Activated CD4-positive, alpha-beta memory T cell treated with anti-CD3 and anti-CD28 coated beads, Interleukin-2, amount 10 ng/mL, durations not matched to agents 7 days and 5 days (primary cell): ENCODE measurements at regions of chr7 and their contacts with region 1.

Region 1: GRCh38 chr7:105387621-105388372 is 924 bp downstream of the SRPK2 start:
- DNase-seq: peak; percentile 60
- H3K4me3 Mint-ChIP-seq: peak overlapping the region; percentile 78
- H3K27ac Mint-ChIP-seq: no peak overlapping the region
- H3K4me1 Mint-ChIP-seq: peaks cover 18% of the 10 kb centered on the region
- H3K27me3 Mint-ChIP-seq: no peaks in the 10 kb centered on the region

Region 2: GRCh38 chr7:105024743-105025142 is 363.1 kb before region 1 on chr7:
- CTCF ChIA-PET with region 1: no interaction called
- POLR2A ChIA-PET with region 1: no interaction called
- DNase-seq: no peak
- H3K4me3 Mint-ChIP-seq: no peak overlapping the region
- H3K27ac Mint-ChIP-seq: no peak overlapping the region
- H3K4me1 Mint-ChIP-seq: peaks cover 78% of the 10 kb centered on the region
- H3K27me3 Mint-ChIP-seq: no peaks in the 10 kb centered on the region

Region 3: GRCh38 chr7:105173586-105173985 is 214.2 kb before region 1 on chr7:
- CTCF ChIA-PET with region 1: no interaction called
- POLR2A ChIA-PET with region 1: no interaction called
- DNase-seq: no peak
- H3K4me3 Mint-ChIP-seq: no peak overlapping the region
- H3K27ac Mint-ChIP-seq: no peak overlapping the region
- H3K4me1 Mint-ChIP-seq: peaks cover 2% of the 10 kb centered on the region
- H3K27me3 Mint-ChIP-seq: no peaks in the 10 kb centered on the region

Region 4: DNA sequence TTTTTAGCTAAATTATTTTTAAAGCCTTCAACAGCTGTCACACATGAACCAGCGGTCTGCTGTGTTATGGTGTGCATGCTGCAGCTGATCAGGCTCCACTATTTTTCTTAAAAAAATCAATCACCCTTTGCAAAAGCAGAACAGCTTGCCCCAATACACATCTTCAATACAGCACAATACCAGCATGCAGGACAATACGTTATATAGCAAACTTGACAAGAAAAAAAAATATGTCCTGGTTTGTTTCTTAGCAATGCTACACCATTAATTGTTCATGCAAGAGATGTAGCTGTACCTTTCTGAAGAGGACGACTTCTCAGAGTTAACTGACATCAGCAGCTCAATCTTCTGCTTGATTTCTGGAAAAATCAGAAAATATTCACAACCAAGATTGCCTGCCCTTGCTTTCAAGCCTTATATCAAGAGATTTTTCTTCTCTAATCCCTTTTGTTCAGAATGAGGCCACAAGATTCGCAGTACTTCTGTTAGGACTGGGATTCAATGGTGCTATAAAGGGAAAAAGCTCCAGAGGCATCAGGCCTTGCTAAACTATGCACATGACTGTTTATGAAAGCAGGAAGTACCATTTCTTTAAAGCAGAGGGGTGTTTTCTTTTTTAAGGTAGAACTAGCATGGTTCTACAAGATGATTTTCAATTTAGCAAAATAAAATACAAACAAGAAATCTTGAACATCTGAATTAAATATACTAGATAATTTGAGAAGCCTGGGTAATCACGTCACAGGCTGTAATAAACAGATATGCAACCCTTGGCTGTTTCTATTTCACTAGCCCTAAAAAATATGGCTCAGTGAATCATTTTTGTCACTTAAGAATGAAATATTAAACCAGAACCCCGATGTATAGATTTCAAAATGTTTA is 119.0 kb before region 1 on chr7:
- CTCF ChIA-PET with region 1: no interaction called
- POLR2A ChIA-PET with region 1: interaction called, 10 read pairs
- DNase-seq: no peak
- H3K4me3 Mint-ChIP-seq: peak overlapping the region; percentile 53
- H3K27ac Mint-ChIP-seq: peak overlapping the region; percentile 62
- H3K4me1 Mint-ChIP-seq: peaks cover 29% of the 10 kb centered on the region
- H3K27me3 Mint-ChIP-seq: no peaks in the 10 kb centered on the region

Region 5: GRCh38 chr7:105346593-105347322 is 41.0 kb before region 1 on chr7:
- CTCF ChIA-PET with region 1: interaction called, 19 read pairs
- POLR2A ChIA-PET with region 1: interaction called, 38 read pairs
- DNase-seq: peak; percentile 49
- H3K4me3 Mint-ChIP-seq: peak overlapping the region; percentile 19
- H3K27ac Mint-ChIP-seq: peak overlapping the region; percentile 73
- H3K4me1 Mint-ChIP-seq: peaks cover 56% of the 10 kb centered on the region
- H3K27me3 Mint-ChIP-seq: no peaks in the 10 kb centered on the region

Region 6: DNA sequence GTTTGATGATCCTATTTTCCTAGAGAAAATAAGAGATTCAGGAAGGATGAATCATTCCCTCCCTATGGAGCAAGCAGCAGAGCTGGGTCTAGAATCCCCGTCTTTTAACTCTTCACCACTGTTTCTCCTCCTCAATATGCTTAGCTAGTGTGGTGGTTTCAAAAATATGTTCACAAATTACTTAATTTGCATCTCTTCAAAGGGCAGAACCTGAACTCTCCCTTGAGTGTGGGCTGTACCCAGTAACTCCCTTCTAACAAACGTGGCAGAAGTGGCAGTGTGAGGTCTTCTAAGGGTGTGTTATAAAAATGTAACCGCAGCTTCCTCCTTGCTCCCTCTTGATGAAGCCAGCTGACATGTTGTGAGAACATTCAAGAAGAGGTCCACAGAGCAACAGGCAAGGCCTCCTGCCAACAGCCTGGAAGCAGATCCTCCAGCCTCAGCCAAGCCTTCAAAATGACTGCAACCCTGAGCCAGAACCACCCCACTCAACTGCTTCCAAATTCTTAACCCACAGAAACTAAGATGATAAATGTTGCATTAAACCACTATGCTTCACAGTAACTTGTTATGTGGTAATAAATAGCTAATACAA is 35.7 kb before region 1 on chr7:
- CTCF ChIA-PET with region 1: interaction called, 19 read pairs
- POLR2A ChIA-PET with region 1: interaction called, 38 read pairs
- DNase-seq: peak; percentile 69
- H3K4me3 Mint-ChIP-seq: peak overlapping the region; percentile 46
- H3K27ac Mint-ChIP-seq: peak overlapping the region; percentile 97
- H3K4me1 Mint-ChIP-seq: peaks cover 54% of the 10 kb centered on the region
- H3K27me3 Mint-ChIP-seq: no peaks in the 10 kb centered on the region

Region 7: DNA sequence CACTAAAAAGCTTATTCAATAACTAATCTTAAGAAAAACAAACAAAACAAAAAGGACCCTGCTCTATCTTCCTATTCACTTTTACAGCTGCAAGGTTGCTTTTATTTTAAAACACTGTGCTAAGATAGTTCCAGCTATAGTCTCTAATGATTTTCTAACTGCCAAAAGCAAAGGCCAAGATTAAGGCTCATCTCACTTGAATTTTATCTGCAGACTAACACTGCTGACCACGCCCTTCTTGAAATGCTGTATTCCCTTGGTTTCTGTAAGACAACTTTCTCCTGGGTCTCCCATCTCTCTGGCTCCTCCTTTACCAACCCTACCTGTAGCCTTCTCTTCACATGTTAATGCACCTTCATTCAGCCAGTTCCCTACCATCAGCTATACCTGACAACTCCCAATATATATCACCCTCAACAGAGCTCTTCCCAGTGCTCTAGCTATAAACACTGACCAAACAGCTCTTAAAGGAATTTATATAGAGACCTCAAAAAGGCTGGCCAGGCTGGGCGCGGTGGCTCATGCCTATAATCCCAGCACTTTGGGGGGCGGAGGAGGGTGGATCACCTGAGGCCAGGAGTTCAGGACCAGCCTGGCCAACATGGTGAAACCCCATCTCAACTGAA is 10.8 kb before region 1 on chr7:
- CTCF ChIA-PET with region 1: interaction called, 3 read pairs
- POLR2A ChIA-PET with region 1: interaction called, 15 read pairs
- DNase-seq: no peak
- H3K4me3 Mint-ChIP-seq: no peak overlapping the region
- H3K27ac Mint-ChIP-seq: no peak overlapping the region
- H3K4me1 Mint-ChIP-seq: peaks cover 7% of the 10 kb centered on the region
- H3K27me3 Mint-ChIP-seq: no peaks in the 10 kb centered on the region

Region 8: GRCh38 chr7:105531792-105532671 is 144.2 kb after region 1 on chr7 and contains the start of gene RINT1:
- CTCF ChIA-PET with region 1: interaction called, 3 read pairs
- POLR2A ChIA-PET with region 1: interaction called, 12 read pairs
- DNase-seq: peak; percentile 92
- H3K4me3 Mint-ChIP-seq: peak within 1 kb of the TSS; percentile 81
- H3K27ac Mint-ChIP-seq: peak within 1 kb of the TSS; percentile 88
- H3K4me1 Mint-ChIP-seq: peaks cover 43% of the 10 kb centered on the region
- H3K27me3 Mint-ChIP-seq: no peaks in the 10 kb centered on the region
- total RNA-seq, gene RINT1: 20.5 to 21.9 TPM